ENCODE measurements at regions of chr4 and their contacts with region 1.

Region 1: GRCh38 chr4:177441803-177442622 is at the start of gene AGA:
- DNase-seq: peak; percentile 90
- ATAC-seq: peak; percentile 91
- H3K4me3 Mint-ChIP-seq: peak within 1 kb of the TSS; percentile 86
- H3K27ac Mint-ChIP-seq: peak within 1 kb of the TSS; percentile 91
- H3K4me1 Mint-ChIP-seq: peaks cover 23% of the 10 kb centered on the region
- H3K27me3 Mint-ChIP-seq: no peaks in the 10 kb centered on the region
- CTCF ChIP-seq: no peak
- total RNA-seq, gene AGA: 27.7 and 31.1 TPM in 2 replicates

Region 2: DNA sequence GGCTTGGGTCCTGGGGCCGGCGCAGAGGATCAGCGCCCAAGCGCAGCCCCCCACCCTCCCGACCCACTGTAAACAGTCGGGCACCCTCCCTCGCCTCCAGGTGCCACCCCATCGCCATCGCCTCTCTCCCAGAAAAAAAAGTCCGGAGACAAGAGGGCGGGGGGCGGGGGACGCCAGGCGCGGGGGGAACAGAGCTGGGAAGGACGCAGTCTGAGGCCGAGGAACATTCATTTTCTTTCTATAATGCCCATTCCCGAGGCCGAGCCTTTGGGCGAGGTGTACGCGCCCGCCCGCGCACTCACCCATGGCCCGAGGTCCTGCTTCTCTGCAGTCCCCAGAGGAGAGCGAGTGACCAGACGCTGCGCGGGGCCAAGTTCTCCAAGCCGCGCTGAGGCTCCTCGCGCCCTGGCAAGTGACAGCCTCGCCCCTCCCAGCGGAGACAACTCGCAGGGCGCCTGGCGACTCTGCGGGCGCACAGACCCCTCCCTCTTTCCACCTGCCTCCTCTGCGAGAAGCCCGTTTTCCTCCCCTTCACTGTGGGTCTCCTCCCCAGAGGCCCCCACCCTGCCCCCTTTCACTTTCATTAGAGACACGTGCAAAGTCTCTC is 1439.9 kb before region 1 on chr4:
- CTCF ChIA-PET with region 1: no interaction called
- POLR2A ChIA-PET with region 1: interaction called, 10 read pairs
- intact Hi-C with region 1: no loop called
- DNase-seq: peak; percentile 25
- ATAC-seq: peak; percentile 92
- H3K4me3 Mint-ChIP-seq: peak overlapping the region; percentile 82
- H3K27ac Mint-ChIP-seq: no peak overlapping the region
- H3K4me1 Mint-ChIP-seq: peaks cover 21% of the 10 kb centered on the region
- H3K27me3 Mint-ChIP-seq: peaks cover 12% of the 10 kb centered on the region
- CTCF ChIP-seq: no peak

Region 3: DNA sequence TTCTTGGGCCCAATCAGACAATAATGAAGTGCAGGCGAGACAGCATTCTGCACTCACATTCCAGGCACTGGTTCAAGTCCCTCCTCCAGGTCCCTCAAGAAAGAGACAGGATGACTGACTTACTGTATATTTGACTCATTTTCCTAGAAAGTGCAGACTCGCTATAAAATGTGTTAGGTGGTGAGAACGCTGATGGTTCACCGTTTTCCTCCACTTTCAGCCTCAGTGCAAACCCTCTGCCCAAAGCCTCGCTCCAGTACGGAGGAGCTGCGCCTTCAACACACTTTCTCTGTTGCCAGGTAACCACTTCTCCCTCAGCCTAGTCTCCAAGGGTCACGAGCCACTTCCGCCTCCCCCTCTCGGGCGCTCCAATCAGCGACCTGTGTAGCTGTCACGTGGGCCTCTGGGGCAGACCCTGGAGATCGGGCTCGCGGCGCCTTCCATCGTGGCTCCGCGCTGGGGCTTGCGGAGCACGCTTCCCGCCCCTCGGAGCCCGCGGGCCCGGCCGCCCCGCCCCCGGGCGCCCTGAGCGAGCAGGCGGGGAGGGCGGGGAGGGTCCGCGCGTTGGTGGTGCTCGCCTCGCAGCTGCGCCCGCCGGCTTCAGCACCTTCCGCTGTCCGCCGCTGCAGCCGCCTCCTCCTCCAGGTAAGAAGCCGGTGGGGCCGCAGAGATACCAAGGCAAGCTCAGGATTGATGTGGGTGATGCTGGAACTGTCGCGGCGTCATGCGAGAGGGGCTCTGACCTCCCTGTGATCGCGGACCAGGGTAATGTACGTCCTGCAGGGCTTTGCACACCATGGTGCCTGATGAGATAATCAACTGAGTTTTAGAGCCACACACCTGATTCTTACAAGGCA is 1376.3 kb before region 1 on chr4 and contains the start of gene WDR17:
- CTCF ChIA-PET with region 1: no interaction called
- POLR2A ChIA-PET with region 1: no interaction called
- intact Hi-C with region 1: loop called (anchors 1 kb)
- DNase-seq: peak; percentile 79
- ATAC-seq: peak; percentile 97
- H3K4me3 Mint-ChIP-seq: peak within 1 kb of the TSS; percentile 90
- H3K27ac Mint-ChIP-seq: peak within 1 kb of the TSS; percentile 73
- H3K4me1 Mint-ChIP-seq: peaks cover 11% of the 10 kb centered on the region
- H3K27me3 Mint-ChIP-seq: peaks cover 3% of the 10 kb centered on the region
- CTCF ChIP-seq: no peak
- total RNA-seq, gene WDR17: 5.7 and 6.2 TPM in 2 replicates

Region 4: DNA sequence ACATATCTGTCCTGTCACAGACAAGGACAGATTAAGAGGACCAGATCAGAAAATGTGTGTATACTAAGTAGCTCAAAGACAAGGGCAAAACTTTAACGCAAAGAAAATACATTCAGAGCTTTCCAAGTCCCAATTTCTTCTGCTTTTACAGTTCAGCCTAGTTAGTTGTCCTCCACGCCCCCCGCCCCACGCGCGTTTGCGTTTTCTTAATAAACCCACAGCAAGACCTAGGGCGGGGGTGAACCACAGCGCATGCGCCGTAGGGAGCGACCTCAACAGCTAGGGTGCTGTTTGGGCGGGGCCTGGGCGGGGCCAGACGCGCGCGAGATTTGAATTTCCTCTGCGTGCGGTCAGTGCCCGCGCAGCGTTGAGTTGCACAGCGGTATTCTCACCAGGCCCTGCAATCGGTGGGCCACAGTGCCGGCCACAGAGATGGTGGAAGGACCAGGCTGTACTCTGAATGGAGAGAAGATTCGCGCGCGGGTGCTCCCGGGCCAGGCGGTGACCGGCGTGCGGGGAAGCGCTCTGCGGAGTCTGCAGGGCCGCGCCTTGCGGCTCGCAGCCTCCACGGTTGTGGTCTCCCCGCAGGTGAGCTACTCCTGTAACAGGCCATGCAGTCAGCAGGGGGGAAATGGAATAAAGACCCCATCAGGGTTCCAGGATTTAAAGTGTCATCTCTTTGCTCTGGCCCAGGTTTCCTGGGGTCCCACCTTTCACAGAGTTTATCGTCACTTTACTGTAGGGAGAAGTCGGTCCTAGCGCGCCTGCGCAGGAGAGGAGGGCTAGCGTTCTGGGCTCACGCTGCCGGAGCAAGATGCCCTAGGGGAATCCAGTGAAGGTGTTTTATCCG is 132.3 kb before region 1 on chr4 and contains the start of gene NEIL3:
- CTCF ChIA-PET with region 1: no interaction called
- POLR2A ChIA-PET with region 1: interaction called, 19 read pairs
- intact Hi-C with region 1: loop called (anchors 1 kb)
- DNase-seq: peak; percentile 84
- ATAC-seq: peak; percentile 96
- H3K4me3 Mint-ChIP-seq: peak within 1 kb of the TSS; percentile 94
- H3K27ac Mint-ChIP-seq: peak within 1 kb of the TSS; percentile 37
- H3K4me1 Mint-ChIP-seq: peaks cover 11% of the 10 kb centered on the region
- H3K27me3 Mint-ChIP-seq: no peaks in the 10 kb centered on the region
- CTCF ChIP-seq: no peak
- total RNA-seq, gene NEIL3: 0.15 and 0.35 TPM in 2 replicates